CD4-positive, alpha-beta memory T cell (primary cell): ENCODE measurements at regions of chr14 and their contacts with region 1.

Region 1: GRCh38 chr14:58427281-58428117 is at the starts of genes KIAA0586 and TIMM9:
- DNase-seq: peak; percentile 95 to 99 (median 98)
- H3K4me3 ChIP-seq: peak within 1 kb of the TSS; percentile 90 to 96
- H3K4me3 Mint-ChIP-seq: peak within 1 kb of the TSS; percentile 91 to 97 (median 94)
- H3K27ac ChIP-seq: peak within 1 kb of the TSS; percentile 88
- H3K27ac Mint-ChIP-seq: peak within 1 kb of the TSS; percentile 94 to 100 (median 98)
- H3K4me1 ChIP-seq: peaks cover 39% of the 10 kb centered on the region
- H3K4me1 Mint-ChIP-seq: peaks cover 23 to 67% (median 44%) of the 10 kb centered on the region in 4 donors
- H3K27me3 ChIP-seq: no peaks in the 10 kb centered on the region
- H3K27me3 Mint-ChIP-seq: peaks cover 0 to 2% of the 10 kb centered on the region in 2 donors
- total RNA-seq, gene KIAA0586: 43.3 to 48.2 TPM
- total RNA-seq, gene TIMM9: 28.0 to 28.3 TPM

Region 2: DNA sequence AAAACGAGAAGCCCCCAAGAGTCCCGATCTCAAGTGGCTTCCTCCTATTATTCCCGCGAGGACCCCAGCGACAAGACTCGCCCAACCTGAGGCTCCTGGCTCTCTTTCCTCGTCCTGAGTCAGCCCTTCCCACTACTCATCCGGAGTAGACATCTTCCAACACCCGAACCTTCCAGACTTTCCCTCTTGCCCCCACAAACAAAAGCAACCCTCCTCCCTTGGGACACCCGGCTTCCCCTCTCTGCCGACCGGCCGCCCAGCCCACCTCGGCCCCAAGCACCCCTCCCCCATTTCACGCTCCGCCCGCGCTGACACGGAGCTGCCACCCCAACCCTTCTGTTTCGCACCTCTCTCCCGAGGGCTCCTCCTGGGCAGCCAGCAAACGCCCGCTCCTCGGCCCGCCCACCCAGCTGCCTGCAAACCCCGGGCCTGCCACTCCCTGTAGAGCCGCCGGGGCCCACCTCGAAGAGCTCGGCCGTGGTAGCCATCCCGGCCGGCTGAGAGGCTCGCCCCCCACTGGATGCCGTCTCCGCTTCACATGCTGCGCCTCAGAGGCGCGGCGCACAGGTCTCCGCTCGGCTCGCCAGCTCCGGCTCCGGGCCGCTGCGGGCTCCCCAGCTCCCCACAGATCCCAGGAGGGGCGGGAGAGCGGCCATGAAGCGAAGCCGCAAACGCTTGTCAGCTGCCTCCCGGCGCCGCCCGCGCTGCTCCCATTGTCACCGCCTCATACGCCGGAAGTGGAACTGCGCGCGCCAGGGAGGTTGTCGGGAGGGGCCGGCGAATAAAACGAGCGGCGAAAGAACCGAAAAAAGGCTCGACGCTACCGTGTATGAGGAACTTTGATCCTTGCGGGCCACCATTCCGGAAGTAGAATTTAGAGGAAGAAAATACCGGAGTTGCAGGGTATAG is 1159.1 kb before region 1 on chr14 and contains the starts of genes AP5M1 and EXOC5:
- CTCF ChIA-PET with region 1: interaction called, 3 read pairs
- POLR2A ChIA-PET with region 1: interaction called, 15 read pairs
- intact Hi-C with region 1: loop called (anchors 1 kb)
- DNase-seq: peak; percentile 93 to 96 (median 93)
- H3K4me3 ChIP-seq: peak within 1 kb of the TSS; percentile 78 to 98
- H3K4me3 Mint-ChIP-seq: peak within 1 kb of the TSS; percentile 97 to 100 (median 99)
- H3K27ac ChIP-seq: peak within 1 kb of the TSS; percentile 88
- H3K27ac Mint-ChIP-seq: peak within 1 kb of the TSS; percentile 98 to 100 (median 99)
- H3K4me1 ChIP-seq: peaks cover 55% of the 10 kb centered on the region
- H3K4me1 Mint-ChIP-seq: peaks cover 45 to 76% (median 61%) of the 10 kb centered on the region in 4 donors
- H3K27me3 ChIP-seq: no peaks in the 10 kb centered on the region
- H3K27me3 Mint-ChIP-seq: no peaks in the 10 kb centered on the region
- total RNA-seq, gene AP5M1: 49.5 to 57.5 TPM
- total RNA-seq, gene EXOC5: 48.3 to 51.4 TPM

Region 3: GRCh38 chr14:58160561-58160960 is 266.9 kb before region 1 on chr14:
- CTCF ChIA-PET with region 1: no interaction called
- POLR2A ChIA-PET with region 1: no interaction called
- intact Hi-C with region 1: no loop called
- DNase-seq: no peak
- H3K4me3 ChIP-seq: no peak overlapping the region
- H3K4me3 Mint-ChIP-seq: no peak overlapping the region
- H3K27ac ChIP-seq: no peak overlapping the region
- H3K27ac Mint-ChIP-seq: no peak overlapping the region
- H3K4me1 ChIP-seq: no peaks in the 10 kb centered on the region
- H3K4me1 Mint-ChIP-seq: no peaks in the 10 kb centered on the region
- H3K27me3 ChIP-seq: no peaks in the 10 kb centered on the region
- H3K27me3 Mint-ChIP-seq: peaks cover 7 to 9% of the 10 kb centered on the region in 2 donors

Region 4: GRCh38 chr14:58199726-58200479 is 227.6 kb before region 1 on chr14 and contains the start of gene ACTR10:
- CTCF ChIA-PET with region 1: no interaction called
- POLR2A ChIA-PET with region 1: interaction called, 13 read pairs
- intact Hi-C with region 1: loop called (anchors 1 kb)
- DNase-seq: peak; percentile 84 to 91 (median 87)
- H3K4me3 ChIP-seq: peak within 1 kb of the TSS; percentile 64 to 75
- H3K4me3 Mint-ChIP-seq: peak within 1 kb of the TSS; percentile 94 to 97 (median 96)
- H3K27ac ChIP-seq: peak within 1 kb of the TSS; percentile 78
- H3K27ac Mint-ChIP-seq: peak within 1 kb of the TSS; percentile 94 to 99 (median 98)
- H3K4me1 ChIP-seq: peaks cover 33% of the 10 kb centered on the region
- H3K4me1 Mint-ChIP-seq: peaks cover 22 to 48% (median 34%) of the 10 kb centered on the region in 4 donors
- H3K27me3 ChIP-seq: no peaks in the 10 kb centered on the region
- H3K27me3 Mint-ChIP-seq: no peaks in the 10 kb centered on the region
- total RNA-seq, gene ACTR10: 53.7 to 54.9 TPM

Region 5: GRCh38 chr14:58244556-58245387 is 182.7 kb before region 1 on chr14 and contains the start of gene PSMA3:
- CTCF ChIA-PET with region 1: no interaction called
- POLR2A ChIA-PET with region 1: interaction called, 20 read pairs
- intact Hi-C with region 1: loop called (anchors 1 kb)
- DNase-seq: peak; percentile 98
- H3K4me3 ChIP-seq: peak within 1 kb of the TSS; percentile 98 to 100
- H3K4me3 Mint-ChIP-seq: peak within 1 kb of the TSS; percentile 96 to 99 (median 98)
- H3K27ac ChIP-seq: peak within 1 kb of the TSS; percentile 96
- H3K27ac Mint-ChIP-seq: peak within 1 kb of the TSS; percentile 98 to 99 (median 99)
- H3K4me1 ChIP-seq: peaks cover 40% of the 10 kb centered on the region
- H3K4me1 Mint-ChIP-seq: peaks cover 35 to 57% (median 48%) of the 10 kb centered on the region in 4 donors
- H3K27me3 ChIP-seq: no peaks in the 10 kb centered on the region
- H3K27me3 Mint-ChIP-seq: peaks cover 0 to 1% of the 10 kb centered on the region in 2 donors
- total RNA-seq, gene PSMA3: 133 to 138 TPM

Region 6: DNA sequence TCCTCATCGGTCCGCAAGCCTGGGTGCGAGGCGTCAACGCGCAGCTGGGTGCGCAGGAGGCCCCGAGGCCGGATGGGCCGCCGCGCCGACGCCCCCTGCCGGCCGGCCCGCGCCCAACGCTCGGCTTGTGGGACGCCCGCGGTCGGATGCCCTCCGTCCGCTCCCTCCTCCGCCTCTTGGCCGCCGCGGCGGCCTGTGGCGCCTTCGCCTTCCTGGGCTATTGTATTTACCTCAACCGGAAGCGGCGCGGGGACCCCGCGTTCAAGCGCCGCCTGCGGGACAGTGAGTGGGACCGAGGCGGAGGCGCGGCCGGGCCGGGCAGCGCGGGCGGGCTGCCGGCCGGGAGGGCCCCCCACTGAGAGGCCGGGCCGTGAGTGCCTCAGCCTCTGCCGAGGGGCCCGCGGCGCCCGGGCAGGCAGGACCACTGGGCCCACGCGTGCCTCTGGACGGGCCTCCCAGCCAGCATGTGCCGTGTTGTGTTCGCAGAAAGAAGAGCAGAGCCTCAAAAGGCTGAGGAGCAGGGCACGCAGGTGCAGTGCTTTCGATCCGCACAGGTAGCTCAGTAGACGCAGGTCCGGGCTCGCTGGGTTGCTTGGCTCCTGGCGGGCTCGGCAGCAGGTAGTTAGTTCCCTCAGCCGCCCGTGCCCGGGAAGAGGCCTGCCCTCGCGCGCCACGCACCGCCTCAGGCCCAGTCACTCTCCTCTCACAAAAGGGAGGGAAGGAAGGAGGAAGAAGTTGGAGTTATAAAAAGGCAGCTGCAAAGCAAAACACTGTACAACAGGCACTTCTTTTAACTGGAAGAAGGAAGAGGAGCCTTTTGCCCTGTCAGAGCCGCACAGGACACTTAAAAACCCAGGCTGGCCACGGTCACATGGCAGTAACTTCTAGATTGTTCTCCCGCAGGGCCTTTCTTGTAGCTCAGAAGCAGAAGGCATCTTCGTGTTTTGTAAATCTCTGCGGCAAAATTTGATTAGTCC is 31.4 kb before region 1 on chr14 and contains the start of gene TOMM20L:
- CTCF ChIA-PET with region 1: interaction called, 49 read pairs
- POLR2A ChIA-PET with region 1: interaction called, 57 read pairs
- intact Hi-C with region 1: loop called (anchors 1 kb)
- DNase-seq: peak; percentile 70 to 81 (median 72)
- H3K4me3 ChIP-seq: peak within 1 kb of the TSS; percentile 24 to 48
- H3K4me3 Mint-ChIP-seq: peak within 1 kb of the TSS; percentile 83 to 91 (median 88)
- H3K27ac ChIP-seq: peak within 1 kb of the TSS; percentile 56
- H3K27ac Mint-ChIP-seq: peak within 1 kb of the TSS; percentile 88 to 95 (median 93)
- H3K4me1 ChIP-seq: peaks cover 12% of the 10 kb centered on the region
- H3K4me1 Mint-ChIP-seq: peaks cover 7 to 21% (median 10%) of the 10 kb centered on the region in 4 donors
- H3K27me3 ChIP-seq: no peaks in the 10 kb centered on the region
- H3K27me3 Mint-ChIP-seq: no peaks in the 10 kb centered on the region
- total RNA-seq, gene TOMM20L: not detected

Region 7: DNA sequence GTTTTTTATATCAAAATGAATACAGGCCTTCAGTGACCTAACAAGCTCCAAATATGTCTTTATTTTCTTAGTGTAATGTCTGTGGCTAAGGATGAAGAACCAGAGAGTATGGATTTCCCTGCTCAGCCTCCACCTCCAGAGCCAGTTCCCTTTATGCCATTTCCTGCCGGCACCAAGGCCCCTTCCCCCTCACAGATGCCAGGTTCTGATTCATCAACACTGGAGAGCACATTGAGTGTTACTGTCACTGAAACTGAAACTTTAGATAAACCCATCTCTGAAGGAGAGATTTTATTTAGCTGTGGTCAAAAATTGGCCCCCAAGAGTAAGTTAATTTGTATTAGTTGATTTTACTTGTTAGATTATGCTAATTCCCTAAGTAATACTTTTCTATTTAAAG is 61.1 kb after region 1 on chr14:
- CTCF ChIA-PET with region 1: no interaction called
- POLR2A ChIA-PET with region 1: no interaction called
- intact Hi-C with region 1: no loop called
- DNase-seq: no peak
- H3K4me3 ChIP-seq: no peak overlapping the region
- H3K4me3 Mint-ChIP-seq: no peak overlapping the region
- H3K27ac ChIP-seq: no peak overlapping the region
- H3K27ac Mint-ChIP-seq: no peak overlapping the region
- H3K4me1 ChIP-seq: no peaks in the 10 kb centered on the region
- H3K4me1 Mint-ChIP-seq: no peaks in the 10 kb centered on the region
- H3K27me3 ChIP-seq: no peaks in the 10 kb centered on the region
- H3K27me3 Mint-ChIP-seq: no peaks in the 10 kb centered on the region

Region 8: GRCh38 chr14:58826845-58827686 is 399.6 kb after region 1 on chr14:
- CTCF ChIA-PET with region 1: no interaction called
- POLR2A ChIA-PET with region 1: no interaction called
- intact Hi-C with region 1: no loop called
- DNase-seq: no peak
- H3K4me3 ChIP-seq: no peak overlapping the region
- H3K4me3 Mint-ChIP-seq: no peak overlapping the region
- H3K27ac ChIP-seq: no peak overlapping the region
- H3K27ac Mint-ChIP-seq: no peak overlapping the region
- H3K4me1 ChIP-seq: no peaks in the 10 kb centered on the region
- H3K4me1 Mint-ChIP-seq: no peaks in the 10 kb centered on the region
- H3K27me3 ChIP-seq: no peaks in the 10 kb centered on the region
- H3K27me3 Mint-ChIP-seq: no peaks in the 10 kb centered on the region